Body of pancreas (tissue), 4 donors: ENCODE measurements at regions of chr15 and their contacts with region 1.

Region 1: GRCh38 chr15:71800835-71801745 is 9.3 kb upstream of the NR2E3 start:
- DNase-seq: peak; percentile 55 to 67 (median 56)
- ATAC-seq: peak; percentile 80
- H3K4me3 ChIP-seq: no peak overlapping the region
- H3K27ac ChIP-seq: no peak overlapping the region
- H3K4me1 ChIP-seq: peaks cover 9% of the 10 kb centered on the region
- H3K27me3 ChIP-seq: peaks cover 0 to 5% of the 10 kb centered on the region in 2 donors
- CTCF ChIP-seq: peak; percentile 73 to 96 (median 91)
- POLR2A ChIP-seq: no peak

Region 2: DNA sequence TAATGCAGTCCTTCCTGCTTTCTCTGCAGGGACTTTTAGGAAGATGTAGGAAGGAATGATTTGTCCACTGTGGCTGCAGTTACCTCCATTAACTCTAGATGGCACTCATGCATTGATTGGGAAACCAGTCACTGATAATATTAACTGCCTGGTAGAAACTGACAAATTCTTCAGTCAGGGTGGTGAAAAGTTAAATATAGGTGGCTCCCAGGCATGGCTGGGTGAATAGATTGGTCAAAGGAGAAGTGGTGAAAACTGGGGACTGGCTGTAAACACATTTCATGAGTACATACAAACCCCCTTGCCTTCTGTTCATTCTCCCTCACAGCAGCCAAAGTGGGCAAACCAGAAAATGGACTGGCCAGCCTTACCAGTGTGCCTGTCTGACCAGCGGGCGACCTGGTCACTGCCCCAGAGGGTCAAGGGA is 352.4 kb before region 1 on chr15:
- intact Hi-C with region 1: loop called (anchors 5 kb)
- DNase-seq: peak; percentile 62 to 76 (median 66)
- ATAC-seq: peak; percentile 72
- H3K4me3 ChIP-seq: no peak overlapping the region
- H3K27ac ChIP-seq: no peak overlapping the region
- H3K4me1 ChIP-seq: peaks cover 4% of the 10 kb centered on the region
- H3K27me3 ChIP-seq: no peaks in the 10 kb centered on the region
- CTCF ChIP-seq: peak; percentile 85 to 95 (median 94)
- POLR2A ChIP-seq: no peak

Region 3: GRCh38 chr15:71596672-71597071 is 204.4 kb before region 1 on chr15:
- intact Hi-C with region 1: no loop called
- DNase-seq: peak; percentile 13 to 33 (median 24)
- ATAC-seq: no peak
- H3K4me3 ChIP-seq: no peak overlapping the region
- H3K27ac ChIP-seq: peak overlapping the region in 1 of 4 donors; percentile 21
- H3K4me1 ChIP-seq: peaks cover 8% of the 10 kb centered on the region
- H3K27me3 ChIP-seq: no peaks in the 10 kb centered on the region
- CTCF ChIP-seq: no peak
- POLR2A ChIP-seq: no peak

Region 4: GRCh38 chr15:71723344-71723743 is 77.7 kb before region 1 on chr15:
- intact Hi-C with region 1: no loop called
- DNase-seq: no peak
- ATAC-seq: no peak
- H3K4me3 ChIP-seq: no peak overlapping the region
- H3K27ac ChIP-seq: no peak overlapping the region
- H3K4me1 ChIP-seq: no peaks in the 10 kb centered on the region
- H3K27me3 ChIP-seq: no peaks in the 10 kb centered on the region
- CTCF ChIP-seq: no peak
- POLR2A ChIP-seq: no peak

Region 5: GRCh38 chr15:71743861-71744382 is 57.2 kb before region 1 on chr15:
- intact Hi-C with region 1: loop called (anchors 5 kb)
- DNase-seq: peak; percentile 71 to 76 (median 74)
- ATAC-seq: no peak
- H3K4me3 ChIP-seq: no peak overlapping the region
- H3K27ac ChIP-seq: no peak overlapping the region
- H3K4me1 ChIP-seq: peaks cover 11% of the 10 kb centered on the region
- H3K27me3 ChIP-seq: no peaks in the 10 kb centered on the region
- CTCF ChIP-seq: peak; percentile 52 to 85 (median 65)
- POLR2A ChIP-seq: no peak

Region 6: GRCh38 chr15:72155635-72156616 is 354.8 kb after region 1 on chr15:
- intact Hi-C with region 1: loop called (anchors 10 kb)
- DNase-seq: peak; percentile 88 to 91 (median 90)
- ATAC-seq: peak; percentile 80
- H3K4me3 ChIP-seq: no peak overlapping the region
- H3K27ac ChIP-seq: peak overlapping the region; percentile 60 to 87 (median 82)
- H3K4me1 ChIP-seq: peaks cover 33% of the 10 kb centered on the region
- H3K27me3 ChIP-seq: no peaks in the 10 kb centered on the region
- CTCF ChIP-seq: peak; percentile 62 to 93 (median 89)
- POLR2A ChIP-seq: no peak

Region 7: GRCh38 chr15:72749700-72750099 is 948.6 kb after region 1 on chr15:
- intact Hi-C with region 1: no loop called
- DNase-seq: no peak
- ATAC-seq: no peak
- H3K4me3 ChIP-seq: no peak overlapping the region
- H3K27ac ChIP-seq: no peak overlapping the region
- H3K4me1 ChIP-seq: no peaks in the 10 kb centered on the region
- H3K27me3 ChIP-seq: no peaks in the 10 kb centered on the region
- CTCF ChIP-seq: no peak
- POLR2A ChIP-seq: no peak